IMR-90 (cell line): ENCODE measurements at regions of chr2 and their contacts with region 1.

Region 1: DNA sequence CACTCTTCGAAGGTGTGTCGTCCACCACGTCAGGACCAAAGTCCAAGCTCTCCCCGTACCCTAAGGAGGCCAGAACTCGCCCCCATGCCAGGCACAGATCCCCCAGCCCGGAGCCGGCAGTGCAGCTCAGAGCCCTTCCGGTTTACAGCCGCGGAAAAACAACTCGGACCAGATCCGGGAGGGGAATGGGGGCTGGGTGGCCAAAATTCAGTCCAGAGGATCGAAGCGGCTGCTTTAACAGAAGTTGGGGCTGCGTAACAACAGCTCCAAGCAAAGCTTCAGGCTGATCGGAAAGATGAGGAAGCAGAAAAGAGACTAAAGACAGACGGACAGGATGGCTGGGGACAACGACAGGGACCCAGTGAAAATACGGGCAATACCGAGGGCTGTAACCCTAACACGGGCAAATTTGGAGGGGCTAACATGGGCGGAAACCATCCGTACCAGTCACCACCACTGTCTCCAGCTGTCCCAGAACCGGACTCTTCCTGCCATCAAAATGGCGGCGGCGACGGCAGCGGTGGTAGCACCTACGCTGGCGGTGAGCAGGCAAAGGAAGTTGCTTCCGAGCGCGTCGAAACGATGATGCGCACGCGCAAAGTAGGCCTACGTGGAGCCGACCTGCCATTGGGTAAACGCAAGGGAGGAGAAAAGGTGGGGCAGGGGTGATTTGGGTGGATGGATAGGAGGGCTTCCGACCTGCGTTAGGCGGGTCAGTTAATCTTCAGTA is at the start of gene MMADHC:
- DNase-seq: peak; percentile 97
- ATAC-seq: peak; percentile 97
- H3K4me3 ChIP-seq: peak within 1 kb of the TSS; percentile 76
- H3K27ac ChIP-seq: peak within 1 kb of the TSS; percentile 94
- H3K4me1 ChIP-seq: peaks cover 5% of the 10 kb centered on the region
- H3K27me3 ChIP-seq: no peaks in the 10 kb centered on the region
- CTCF ChIP-seq: no peak
- POLR2A ChIP-seq: peak; percentile 95
- RAD21 ChIP-seq: 0 out of 2 replicates have a peak, but pooled peaks have one; percentile 5
- total RNA-seq, gene MMADHC: 112 and 159 TPM in 2 replicates

Region 2: DNA sequence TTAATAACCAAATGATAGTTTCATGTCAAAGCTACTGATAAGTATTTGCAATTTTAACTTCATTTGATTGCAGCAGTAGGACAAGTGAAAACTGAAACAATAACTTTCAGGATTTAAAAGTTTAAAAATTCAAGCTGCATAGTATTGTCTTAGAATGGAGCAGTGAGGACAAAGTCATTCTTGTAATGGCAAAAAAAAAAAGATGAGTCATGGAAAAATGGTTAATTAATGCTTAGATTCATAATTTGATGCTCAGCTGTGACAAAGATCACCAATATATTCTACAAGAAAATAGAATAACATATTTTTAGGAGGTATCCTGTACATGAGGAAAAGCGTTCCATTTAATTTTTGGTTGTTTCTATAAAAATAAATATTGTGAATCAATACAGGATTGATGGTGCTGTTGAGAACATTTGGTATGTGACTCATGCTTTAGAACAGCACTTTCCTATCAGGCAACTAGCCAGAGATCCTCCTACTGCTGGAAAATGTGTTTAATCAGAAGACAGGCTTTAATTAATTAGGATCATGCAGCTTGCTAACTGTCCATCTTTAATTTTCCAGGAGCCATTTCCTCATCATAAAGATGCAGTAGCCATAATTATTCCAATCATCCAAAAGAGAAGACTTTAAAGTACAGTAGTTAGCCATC is 239.2 kb after region 1 on chr2:
- CTCF ChIA-PET with region 1: no interaction called
- POLR2A ChIA-PET with region 1: no interaction called
- dilution Hi-C with region 1: no loop called
- in situ Hi-C with region 1: no loop called
- intact Hi-C with region 1: no loop called
- DNase-seq: peak; percentile 18
- ATAC-seq: no peak
- H3K4me3 ChIP-seq: no peak overlapping the region
- H3K27ac ChIP-seq: no peak overlapping the region
- H3K4me1 ChIP-seq: peaks cover 5% of the 10 kb centered on the region; the same call in 1 of the 2 replicates
- H3K27me3 ChIP-seq: no peaks in the 10 kb centered on the region
- CTCF ChIP-seq: no peak
- POLR2A ChIP-seq: no peak
- RAD21 ChIP-seq: no peak

Region 3: DNA sequence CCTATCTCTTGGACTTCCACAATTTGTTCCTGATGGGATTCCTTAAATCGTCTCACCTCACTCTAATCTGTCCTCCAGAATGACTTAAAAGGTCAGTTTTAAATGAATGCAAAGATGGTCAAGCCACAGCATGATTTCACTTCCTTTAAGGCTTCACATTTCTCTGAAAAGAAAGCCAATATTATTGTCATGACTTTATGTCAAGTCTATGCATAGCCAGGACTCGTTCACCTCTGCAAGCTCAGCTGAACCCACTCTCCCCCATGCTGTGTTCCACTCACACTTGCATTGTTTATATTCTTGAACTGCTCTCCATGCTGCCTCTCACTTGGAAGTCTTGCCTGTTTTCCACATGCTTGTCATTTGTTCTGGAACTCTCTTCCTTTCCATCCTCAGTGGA is 298.6 kb after region 1 on chr2:
- CTCF ChIA-PET with region 1: no interaction called
- POLR2A ChIA-PET with region 1: interaction called, 23 read pairs
- dilution Hi-C with region 1: no loop called
- in situ Hi-C with region 1: no loop called
- intact Hi-C with region 1: no loop called
- DNase-seq: no peak
- ATAC-seq: no peak
- H3K4me3 ChIP-seq: no peak overlapping the region
- H3K27ac ChIP-seq: no peak overlapping the region
- H3K4me1 ChIP-seq: no peaks in the 10 kb centered on the region
- H3K27me3 ChIP-seq: no peaks in the 10 kb centered on the region
- CTCF ChIP-seq: no peak
- POLR2A ChIP-seq: no peak
- RAD21 ChIP-seq: no peak